PC-3 (cell line): ENCODE measurements at regions of chr6 and their contacts with region 1.

Region 1: DNA sequence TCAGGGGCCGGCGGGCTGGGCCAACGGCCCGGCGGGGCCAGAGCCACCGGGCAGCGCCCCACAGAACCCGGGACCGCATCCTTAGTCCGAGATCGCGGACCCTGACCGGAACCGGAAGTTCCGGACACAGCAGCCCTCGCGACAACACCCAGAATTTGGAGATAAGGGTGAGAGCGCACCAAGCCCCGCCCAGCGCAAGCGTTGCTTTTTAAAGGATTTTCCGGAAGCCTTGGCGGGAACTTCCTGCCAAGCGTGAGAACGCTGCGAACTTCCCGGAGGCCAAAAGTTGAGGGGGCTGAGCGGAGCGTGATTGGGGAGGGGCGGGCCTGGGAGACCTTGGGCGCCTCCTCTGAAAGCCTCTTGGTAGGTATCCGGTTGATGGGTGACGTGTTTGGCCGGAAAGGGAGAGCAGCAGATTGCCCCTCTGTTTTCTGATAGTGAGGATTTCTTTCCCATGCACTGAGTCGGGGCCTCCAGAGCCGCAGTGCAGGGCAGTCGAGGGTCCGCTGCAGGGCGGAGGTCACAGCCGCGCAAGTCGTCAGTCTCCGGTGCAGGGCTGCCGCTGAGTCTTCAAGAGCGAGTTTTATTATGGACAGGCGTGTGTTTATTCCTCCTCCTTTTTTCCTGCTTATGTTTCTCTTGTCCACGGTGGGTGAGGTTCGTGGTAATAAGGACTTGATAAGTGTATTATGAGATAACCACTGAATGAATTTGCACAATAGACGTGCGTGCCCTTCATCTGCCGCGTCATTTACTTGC is at the start of gene MTRF1L:
- DNase-seq: peak; percentile 95
- ATAC-seq: peak; percentile 90
- H3K4me3 ChIP-seq: peak within 1 kb of the TSS; percentile 100
- H3K27ac ChIP-seq: peak within 1 kb of the TSS; percentile 81
- H3K4me1 ChIP-seq: peaks cover 17% of the 10 kb centered on the region
- H3K27me3 ChIP-seq: no peaks in the 10 kb centered on the region
- CTCF ChIP-seq: no peak
- total RNA-seq, gene MTRF1L: 12.7 and 19.1 TPM in 2 replicates

Region 2: DNA sequence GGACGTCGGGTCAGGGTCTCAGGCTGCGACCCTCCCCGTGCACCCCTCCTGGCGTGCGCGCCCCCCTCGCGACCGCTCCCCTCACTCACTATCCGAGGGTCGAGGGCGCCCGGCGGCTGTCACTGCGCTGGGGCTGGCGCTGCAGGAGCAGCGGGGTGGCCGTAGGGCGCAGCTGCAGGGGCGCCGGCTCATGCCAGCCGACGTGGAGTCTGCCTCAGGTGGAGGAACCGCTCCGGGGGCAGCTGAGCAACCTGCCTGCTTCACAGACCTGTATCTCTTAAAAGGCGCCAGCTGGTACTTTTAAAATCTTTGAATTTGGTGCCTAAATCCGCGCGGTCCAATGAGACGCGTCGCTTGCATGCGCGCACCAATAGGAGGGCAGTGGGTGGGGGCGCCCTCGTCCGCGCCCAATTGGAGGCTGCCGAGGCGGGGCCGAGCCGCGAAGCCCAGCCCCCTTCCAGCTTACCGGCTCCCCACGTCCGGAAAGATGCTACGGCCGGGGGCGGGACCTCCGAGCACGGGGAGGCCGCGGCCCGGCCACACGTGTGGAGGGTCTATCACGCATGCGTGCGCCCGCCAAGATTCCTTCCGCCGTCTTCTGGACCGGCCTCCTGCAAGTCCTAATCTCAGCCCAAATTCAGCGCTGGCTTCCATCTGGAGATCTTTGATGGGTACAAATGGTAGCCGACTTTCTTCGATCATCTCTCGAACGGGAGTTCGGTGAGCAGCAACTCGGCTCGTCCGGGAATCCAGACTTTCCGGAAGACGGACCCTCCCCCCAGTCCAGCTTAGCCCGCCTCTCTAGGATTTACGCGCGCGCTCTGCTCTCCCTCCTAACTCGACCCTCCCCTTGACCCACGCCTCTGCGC is 19.8 kb before region 1 on chr6 and contains the start of gene FBXO5:
- CTCF ChIA-PET with region 1: no interaction called
- POLR2A ChIA-PET with region 1: no interaction called
- intact Hi-C with region 1: loop called (anchors 2 kb)
- DNase-seq: peak; percentile 95
- ATAC-seq: peak; percentile 84
- H3K4me3 ChIP-seq: peak within 1 kb of the TSS; percentile 83
- H3K27ac ChIP-seq: peak within 1 kb of the TSS; percentile 97
- H3K4me1 ChIP-seq: peaks cover 25% of the 10 kb centered on the region
- H3K27me3 ChIP-seq: no peaks in the 10 kb centered on the region
- CTCF ChIP-seq: no peak
- total RNA-seq, gene FBXO5: 11.5 and 16.8 TPM in 2 replicates